H1 (cell line): ENCODE measurements at regions of chr20 and their contacts with region 1.

Region 1: DNA sequence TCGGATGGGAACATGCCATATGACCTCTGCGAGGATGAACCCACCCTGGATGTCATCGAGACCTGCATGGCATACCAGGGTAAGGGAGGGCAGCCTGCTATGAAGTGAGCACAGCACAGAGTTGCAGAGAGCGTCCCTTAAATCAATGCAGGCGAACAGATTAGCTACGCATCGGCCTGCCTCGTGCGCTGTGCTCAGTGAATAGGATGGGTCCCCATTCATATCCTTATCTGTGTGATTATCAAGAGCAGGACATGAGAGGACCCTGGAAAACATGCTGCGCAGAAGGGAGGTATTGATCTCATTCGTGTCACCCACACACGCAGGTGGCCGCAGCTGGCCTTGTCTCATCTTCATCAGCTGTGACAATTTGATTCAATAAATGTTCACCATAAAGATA is 25.6 kb upstream of the FAM83D start:
- DNase-seq: no peak
- H3K4me3 ChIP-seq: no peak overlapping the region
- H3K27ac ChIP-seq: no peak overlapping the region
- H3K4me1 ChIP-seq: no peaks in the 10 kb centered on the region
- H3K27me3 ChIP-seq: no peaks in the 10 kb centered on the region
- CTCF ChIP-seq: no peak
- EP300 ChIP-seq: no peak
- POLR2A ChIP-seq: no peak
- RAD21 ChIP-seq: no peak

Region 2: GRCh38 chr20:38870733-38871559 is 29.7 kb before region 1 on chr20:
- CTCF ChIA-PET with region 1: no interaction called
- POLR2A ChIA-PET with region 1: no interaction called
- DNase-seq: no peak
- H3K4me3 ChIP-seq: no peak overlapping the region
- H3K27ac ChIP-seq: no peak overlapping the region
- H3K4me1 ChIP-seq: peaks cover 0 to 15% (median 5%) of the 10 kb centered on the region in 4 experiments; a peak in 6 of 7 replicates
- H3K27me3 ChIP-seq: no peaks in the 10 kb centered on the region
- CTCF ChIP-seq: no peak
- EP300 ChIP-seq: no peak
- POLR2A ChIP-seq: no peak
- RAD21 ChIP-seq: no peak

Region 3: DNA sequence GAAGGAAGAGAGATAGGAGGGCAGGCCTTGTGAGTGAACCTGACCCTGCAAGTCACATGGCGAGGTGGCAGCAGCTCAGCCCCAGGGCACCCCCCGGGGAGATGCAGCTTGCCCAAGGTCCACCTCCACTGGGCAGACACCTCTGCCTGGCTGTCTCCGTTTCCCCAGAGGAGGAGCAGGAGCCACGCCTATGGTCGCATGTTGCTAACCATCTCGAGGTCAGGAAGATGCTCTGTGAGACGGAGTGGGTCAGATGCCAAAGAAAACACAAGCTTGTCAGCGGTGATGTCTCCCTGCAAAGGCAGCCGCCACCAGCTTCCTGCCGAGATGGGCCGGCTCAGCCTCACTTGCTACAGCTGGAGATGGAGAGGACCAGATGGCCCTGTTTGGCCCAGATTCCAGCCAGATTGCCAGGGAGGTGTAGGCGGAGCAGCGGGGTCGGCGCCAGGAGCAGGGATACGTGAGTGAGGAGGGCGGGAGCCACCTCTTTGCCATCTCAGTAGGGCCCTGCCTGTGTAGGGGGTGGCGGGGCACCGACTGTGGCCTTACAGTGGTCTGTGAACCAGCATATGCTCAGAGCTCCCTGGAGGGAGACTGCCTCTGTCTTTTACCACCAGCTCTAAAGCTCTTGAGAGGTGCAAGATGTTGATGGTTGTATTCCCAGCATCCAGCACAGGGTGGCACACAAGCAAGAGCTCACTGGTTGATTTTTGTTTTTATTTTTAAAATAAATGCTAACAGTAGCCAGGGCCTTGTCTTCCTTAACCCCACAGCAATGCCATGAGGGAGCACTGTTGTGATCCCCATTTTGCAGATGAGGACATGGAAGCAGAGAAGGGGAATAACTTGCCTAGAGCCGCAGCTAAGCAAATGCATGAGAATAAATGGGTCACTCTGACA is 17.3 kb before region 1 on chr20:
- CTCF ChIA-PET with region 1: interaction called, 79 read pairs
- POLR2A ChIA-PET with region 1: interaction called, 3 read pairs
- DNase-seq: no peak
- H3K4me3 ChIP-seq: no peak overlapping the region
- H3K27ac ChIP-seq: no peak overlapping the region
- H3K4me1 ChIP-seq: peaks cover 0 to 7% (median 2%) of the 10 kb centered on the region in 4 experiments; a peak in 5 of 7 replicates
- H3K27me3 ChIP-seq: no peaks in the 10 kb centered on the region
- CTCF ChIP-seq: no peak
- EP300 ChIP-seq: no peak
- POLR2A ChIP-seq: no peak
- RAD21 ChIP-seq: no peak

Region 4: GRCh38 chr20:38932457-38933120 is 32.0 kb after region 1 on chr20:
- CTCF ChIA-PET with region 1: no interaction called
- POLR2A ChIA-PET with region 1: no interaction called
- DNase-seq: no peak
- H3K4me3 ChIP-seq: no peak overlapping the region
- H3K27ac ChIP-seq: no peak overlapping the region
- H3K4me1 ChIP-seq: peaks cover 6 to 12% (median 9%) of the 10 kb centered on the region in 4 experiments
- H3K27me3 ChIP-seq: no peaks in the 10 kb centered on the region
- CTCF ChIP-seq: no peak
- EP300 ChIP-seq: no peak
- POLR2A ChIP-seq: no peak
- RAD21 ChIP-seq: no peak